Calu3 (cell line): ENCODE measurements at regions of chr10 and their contacts with region 1.

Region 1: GRCh38 chr10:33008499-33009243 is 50.6 kb upstream of the ITGB1 start:
- DNase-seq: peak; percentile 80
- H3K4me3 Mint-ChIP-seq: peak overlapping the region; percentile 8
- H3K27ac Mint-ChIP-seq: peak overlapping the region; percentile 83
- H3K4me1 Mint-ChIP-seq: peaks cover 38% of the 10 kb centered on the region
- H3K27me3 Mint-ChIP-seq: no peaks in the 10 kb centered on the region
- CTCF ChIP-seq: peak; percentile 89

Region 2: GRCh38 chr10:32256613-32257437 is 751.8 kb before region 1 on chr10:
- CTCF ChIA-PET with region 1: no interaction called
- intact Hi-C with region 1: loop called (anchors 5 kb)
- DNase-seq: peak; percentile 57
- H3K4me3 Mint-ChIP-seq: no peak overlapping the region
- H3K27ac Mint-ChIP-seq: no peak overlapping the region
- H3K4me1 Mint-ChIP-seq: peaks cover 12% of the 10 kb centered on the region
- H3K27me3 Mint-ChIP-seq: no peaks in the 10 kb centered on the region
- CTCF ChIP-seq: peak; percentile 79

Region 3: DNA sequence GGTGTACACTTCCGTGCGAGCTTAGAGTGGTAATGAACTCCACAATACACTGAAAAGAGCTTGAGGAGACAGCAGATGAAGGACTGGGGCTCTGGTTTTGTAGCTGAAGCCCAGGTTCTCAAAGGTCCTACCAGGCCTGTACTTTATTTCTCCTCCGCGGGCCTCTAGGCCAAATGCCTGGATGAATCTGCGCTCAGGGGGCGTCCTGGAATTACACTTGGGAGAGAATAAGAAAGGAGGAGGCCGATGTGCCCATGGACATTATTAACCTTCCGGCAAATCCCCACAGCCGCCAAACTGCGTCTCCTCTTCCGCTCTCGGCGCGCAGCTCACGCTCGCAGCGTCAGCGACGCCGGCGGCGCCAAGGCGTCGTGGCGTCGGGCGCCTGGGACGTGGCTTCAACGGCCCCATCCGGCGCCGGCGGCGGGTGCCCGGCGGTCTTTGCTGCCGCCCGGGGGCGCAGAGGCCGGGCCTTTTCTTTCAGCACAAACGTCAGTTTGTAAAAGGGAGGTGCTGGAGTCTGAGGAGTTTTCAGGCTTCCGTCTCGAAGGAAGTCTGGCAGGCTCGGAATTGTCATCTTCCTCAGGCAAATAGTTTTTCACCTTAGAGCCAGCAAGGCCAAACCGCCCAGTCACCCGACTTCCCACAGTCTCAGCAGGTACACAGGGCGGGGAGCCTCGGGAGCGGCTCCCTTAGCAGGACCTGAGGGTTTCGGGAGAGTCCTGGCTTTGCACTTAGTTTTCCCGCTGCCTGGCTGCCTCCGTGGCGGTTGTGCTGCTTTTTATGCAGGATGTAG is 562.7 kb before region 1 on chr10 and contains the start of gene CCDC7:
- CTCF ChIA-PET with region 1: no interaction called
- intact Hi-C with region 1: loop called (anchors 10 kb)
- DNase-seq: peak; percentile 84
- H3K4me3 Mint-ChIP-seq: peak within 1 kb of the TSS; percentile 71
- H3K27ac Mint-ChIP-seq: peak within 1 kb of the TSS; percentile 71
- H3K4me1 Mint-ChIP-seq: no peaks in the 10 kb centered on the region
- H3K27me3 Mint-ChIP-seq: peaks cover 18% of the 10 kb centered on the region
- CTCF ChIP-seq: peak; percentile 38
- total RNA-seq, gene CCDC7: 7.4 and 8.4 TPM in 2 replicates

Region 4: GRCh38 chr10:32893431-32893830 is 115.2 kb before region 1 on chr10:
- CTCF ChIA-PET with region 1: no interaction called
- intact Hi-C with region 1: loop called (anchors 5 kb)
- DNase-seq: no peak
- H3K4me3 Mint-ChIP-seq: no peak overlapping the region
- H3K27ac Mint-ChIP-seq: peak overlapping the region; percentile 66
- H3K4me1 Mint-ChIP-seq: peaks cover 8% of the 10 kb centered on the region
- H3K27me3 Mint-ChIP-seq: no peaks in the 10 kb centered on the region
- CTCF ChIP-seq: no peak

Region 5: DNA sequence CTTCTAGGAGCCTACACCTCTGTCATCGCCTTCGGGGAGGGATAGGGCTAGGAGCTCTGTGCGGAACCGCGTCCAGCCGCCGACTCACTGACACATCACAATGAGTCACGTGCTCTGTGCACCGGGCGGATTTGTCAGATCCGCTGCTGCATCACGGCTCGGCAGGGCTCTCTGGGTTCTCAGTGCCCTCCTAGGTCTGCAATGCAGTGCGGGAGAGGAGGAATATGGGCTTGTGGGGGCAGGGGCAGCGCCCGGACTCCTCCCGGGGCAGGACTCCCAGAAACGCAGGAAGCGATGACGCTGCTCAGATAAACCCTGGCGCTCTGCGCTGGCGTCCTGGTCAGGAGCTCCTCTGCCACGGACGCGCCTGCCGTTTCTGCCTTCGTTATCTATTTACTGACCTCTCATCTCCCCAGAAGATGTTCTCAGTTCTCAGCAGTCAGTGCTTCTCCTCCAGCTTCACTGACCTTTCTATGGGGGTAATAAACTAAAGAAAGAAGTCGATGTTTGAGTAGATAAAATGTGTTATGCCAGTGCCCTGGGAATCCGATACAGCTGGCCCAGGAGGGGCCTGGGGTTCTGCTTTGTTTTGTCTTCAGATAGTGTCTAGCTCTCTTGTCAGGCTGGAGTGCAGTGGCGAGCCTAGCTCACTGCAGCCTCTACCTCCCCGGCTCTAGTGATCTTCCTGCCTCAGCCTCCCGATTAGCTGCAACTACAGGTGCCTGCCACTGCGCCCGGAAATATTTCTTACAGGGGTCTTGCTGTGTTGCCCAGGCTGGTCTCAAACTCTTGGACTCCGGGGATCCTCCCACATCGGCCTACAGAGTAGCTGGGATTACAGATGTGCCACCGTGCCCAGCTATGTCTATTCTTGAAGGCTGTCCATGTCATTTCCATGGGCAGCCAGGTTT is 27.9 kb before region 1 on chr10:
- CTCF ChIA-PET with region 1: interaction called, 14 read pairs
- intact Hi-C with region 1: loop called (anchors 1 kb)
- DNase-seq: peak; percentile 93
- H3K4me3 Mint-ChIP-seq: peak overlapping the region; percentile 82
- H3K27ac Mint-ChIP-seq: peak overlapping the region; percentile 100
- H3K4me1 Mint-ChIP-seq: peaks cover 42% of the 10 kb centered on the region
- H3K27me3 Mint-ChIP-seq: no peaks in the 10 kb centered on the region
- CTCF ChIP-seq: no peak

Region 6: GRCh38 chr10:33155720-33156638 is 147.3 kb after region 1 on chr10:
- CTCF ChIA-PET with region 1: interaction called, 30 read pairs
- intact Hi-C with region 1: loop called (anchors 1 kb)
- DNase-seq: peak; percentile 72
- H3K4me3 Mint-ChIP-seq: peak overlapping the region; percentile 6
- H3K27ac Mint-ChIP-seq: peak overlapping the region; percentile 96
- H3K4me1 Mint-ChIP-seq: peaks cover 60% of the 10 kb centered on the region
- H3K27me3 Mint-ChIP-seq: no peaks in the 10 kb centered on the region
- CTCF ChIP-seq: peak; percentile 76

Region 7: DNA sequence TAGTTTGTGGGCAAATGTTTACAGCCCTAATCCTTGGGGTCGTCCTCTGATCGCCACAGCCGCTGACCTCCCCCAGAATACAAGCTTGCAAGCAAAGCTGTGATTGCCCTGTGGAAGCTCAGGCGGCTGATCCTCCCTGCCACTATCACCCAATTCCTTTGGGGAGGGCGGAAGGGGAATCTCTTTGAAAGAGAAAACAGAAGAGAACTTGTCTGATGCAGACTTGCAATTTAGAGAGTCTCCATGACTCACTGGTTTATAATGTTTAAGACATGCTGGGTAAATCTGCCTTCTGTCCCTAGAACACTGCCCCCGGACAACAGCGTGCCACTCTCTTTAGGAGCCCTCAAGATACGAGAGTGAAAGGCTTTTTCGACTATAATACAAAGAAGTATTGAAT is 250.3 kb after region 1 on chr10:
- CTCF ChIA-PET with region 1: no interaction called
- intact Hi-C with region 1: no loop called
- DNase-seq: no peak
- H3K4me3 Mint-ChIP-seq: no peak overlapping the region
- H3K27ac Mint-ChIP-seq: peak overlapping the region; percentile 17
- H3K4me1 Mint-ChIP-seq: peaks cover 18% of the 10 kb centered on the region
- H3K27me3 Mint-ChIP-seq: no peaks in the 10 kb centered on the region
- CTCF ChIP-seq: no peak